A549 (cell line): ENCODE measurements at regions of chr19 and their contacts with region 1.

Region 1: GRCh38 chr19:45340232-45340898 is at the start of gene KLC3:
- DNase-seq: peak in 1 of 2 experiments; percentile 26
- ATAC-seq: peak; percentile 21 to 26; a peak in 3 of 6 replicates
- H3K4me3 ChIP-seq: peak within 1 kb of the TSS; percentile 59
- H3K27ac ChIP-seq: peak within 1 kb of the TSS; percentile 52 to 81; a peak in 4 of 6 replicates
- H3K4me1 ChIP-seq: peaks cover 3% of the 10 kb centered on the region; the same call in 2 of the 3 replicates
- CTCF ChIP-seq: no peak
- EP300 ChIP-seq: no peak
- POLR2A ChIP-seq: no peak
- RAD21 ChIP-seq: no peak
- polyA plus RNA-seq, gene KLC3: 0.26 and 0.32 TPM in 2 replicates

Region 2: GRCh38 chr19:45164577-45165335 is 175.6 kb before region 1 on chr19:
- CTCF ChIA-PET with region 1: interaction called, 11 read pairs
- POLR2A ChIA-PET with region 1: no interaction called
- DNase-seq: peak in 1 of 2 experiments; percentile 79
- ATAC-seq: peak; percentile 20 to 68
- H3K4me3 ChIP-seq: no peak overlapping the region
- H3K27ac ChIP-seq: peak overlapping the region in 1 of 2 experiments; percentile 13; a peak in 2 of 6 replicates
- H3K4me1 ChIP-seq: 0 out of 3 replicates have a peak, but pooled peaks cover 4% of the 10 kb centered on the region
- CTCF ChIP-seq: no peak
- EP300 ChIP-seq: no peak
- POLR2A ChIP-seq: no peak
- RAD21 ChIP-seq: no peak

Region 3: DNA sequence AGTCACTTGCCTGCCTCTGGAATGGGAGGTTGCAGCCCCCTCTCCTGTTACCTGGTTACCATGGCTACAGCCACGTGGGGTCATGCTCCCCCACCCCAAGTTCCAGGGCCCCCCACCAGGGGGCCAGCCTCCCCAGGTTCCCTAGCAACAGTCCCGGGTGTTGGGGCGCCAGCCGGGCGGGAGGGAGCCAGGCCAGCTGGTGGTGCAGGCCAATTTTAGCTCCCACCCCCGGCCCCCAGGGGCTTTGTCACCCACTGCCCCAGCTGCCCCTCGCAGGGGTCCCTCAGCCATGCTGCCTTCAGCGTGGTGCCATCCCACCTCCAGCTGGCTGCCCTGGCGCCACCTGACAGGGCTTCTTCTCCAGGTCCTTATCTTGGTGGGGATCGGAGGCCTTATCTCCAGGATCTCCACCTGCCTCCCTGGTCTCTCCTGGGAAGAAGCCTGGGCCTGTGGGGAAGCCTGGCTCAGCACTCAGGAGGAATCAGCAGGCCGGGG is 86.3 kb before region 1 on chr19:
- CTCF ChIA-PET with region 1: interaction called, 10 read pairs
- POLR2A ChIA-PET with region 1: no interaction called
- DNase-seq: no peak
- ATAC-seq: no peak
- H3K4me3 ChIP-seq: no peak overlapping the region
- H3K27ac ChIP-seq: no peak overlapping the region
- H3K4me1 ChIP-seq: peaks cover 7% of the 10 kb centered on the region; the same call in 2 of the 3 replicates
- CTCF ChIP-seq: no peak
- EP300 ChIP-seq: no peak
- POLR2A ChIP-seq: no peak
- RAD21 ChIP-seq: no peak

Region 4: DNA sequence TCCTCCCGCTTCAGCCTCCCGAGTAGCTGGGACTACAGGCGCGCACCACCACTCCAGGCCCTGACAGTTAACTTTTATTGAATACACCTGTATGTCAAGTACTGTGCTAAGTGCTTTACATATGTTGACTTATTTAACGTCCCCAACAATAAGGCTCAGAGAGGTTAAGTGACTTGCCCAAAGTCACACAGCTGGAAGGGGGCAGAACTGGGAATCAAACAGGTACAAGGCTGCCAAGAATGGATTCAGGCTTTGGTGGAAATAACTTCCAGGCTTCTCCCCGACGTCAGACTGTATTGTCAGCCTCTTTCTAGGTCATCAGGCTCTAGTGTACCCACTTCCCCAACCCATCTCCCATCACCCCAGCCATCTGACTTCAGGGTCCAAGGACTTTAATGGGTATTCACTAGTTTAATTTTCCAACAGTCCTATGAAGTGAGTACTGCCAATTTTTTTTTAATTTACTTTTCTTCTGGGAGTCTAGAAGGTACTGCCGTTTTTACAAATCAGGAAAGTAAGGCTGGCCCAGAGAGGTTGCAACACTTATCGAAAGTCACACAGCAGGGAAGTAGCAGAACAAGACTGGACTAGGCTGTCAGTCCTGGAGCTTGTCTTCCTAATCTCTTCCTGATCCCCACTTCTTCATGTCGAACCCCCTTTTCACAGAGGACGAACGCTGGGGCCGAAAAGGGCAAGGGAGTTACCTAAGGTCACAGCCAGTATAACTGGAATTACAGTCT is 12.8 kb before region 1 on chr19:
- CTCF ChIA-PET with region 1: interaction called, 29 read pairs
- POLR2A ChIA-PET with region 1: no interaction called
- DNase-seq: no peak
- ATAC-seq: no peak
- H3K4me3 ChIP-seq: no peak overlapping the region
- H3K27ac ChIP-seq: no peak overlapping the region
- H3K4me1 ChIP-seq: peaks cover 5% of the 10 kb centered on the region; the same call in 1 of the 3 replicates
- CTCF ChIP-seq: no peak
- EP300 ChIP-seq: no peak
- POLR2A ChIP-seq: no peak
- RAD21 ChIP-seq: no peak